ENCODE measurements at regions of chrX and their contacts with region 1.

Region 1: DNA sequence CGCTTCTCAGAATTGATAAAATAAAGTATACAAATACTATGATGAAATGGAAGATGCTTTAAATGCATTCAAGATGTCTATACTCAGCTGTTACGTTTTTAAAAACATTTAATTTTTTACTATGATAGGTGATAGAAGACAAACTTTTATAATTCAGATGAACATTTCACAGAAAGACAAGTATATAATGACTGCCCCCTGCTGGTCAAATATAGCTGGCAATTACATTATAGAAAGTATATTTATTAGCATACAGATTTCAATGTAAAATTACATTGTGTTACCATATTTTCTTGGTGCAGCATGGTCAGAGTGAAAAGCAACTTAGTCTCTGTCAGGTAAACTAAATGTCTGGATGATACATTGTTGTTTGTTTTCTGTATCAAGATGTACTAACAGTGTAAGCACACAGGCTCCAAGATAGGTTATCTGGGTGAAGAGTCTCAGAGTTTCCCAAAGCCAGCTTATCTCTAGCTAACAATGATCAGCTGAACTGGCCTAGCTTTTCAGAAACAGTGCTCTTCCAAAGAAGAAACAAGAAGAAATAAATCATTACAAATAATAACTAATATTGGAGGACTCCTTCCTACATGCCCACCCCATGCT is 54.1 kb downstream of the SRPX start:
- DNase-seq: peak; percentile 43

Region 2: GRCh38 chrX:37509349-37509748 is 657.2 kb before region 1 on chrX:
- in situ Hi-C with region 1: loop called (anchors 25 kb)
- DNase-seq: peak; percentile 46

Region 3: DNA sequence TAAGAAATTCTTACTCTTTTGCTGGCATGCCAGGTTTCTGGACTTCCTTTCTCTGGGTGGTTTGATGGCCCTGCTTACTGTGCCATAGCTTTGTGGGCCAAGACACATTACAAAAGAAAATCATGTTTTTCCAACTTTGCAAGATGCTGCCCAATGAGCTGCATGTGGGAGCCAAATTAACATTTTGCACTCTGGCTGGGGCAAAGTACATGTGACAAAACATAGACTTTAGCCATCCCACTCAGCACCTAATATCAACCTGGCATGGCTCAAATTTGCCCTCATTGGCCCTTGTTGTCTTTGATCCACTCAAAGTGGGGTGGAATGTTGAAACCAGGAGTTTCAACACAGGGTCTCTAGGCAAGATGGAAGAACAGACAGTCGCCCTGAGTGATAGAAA is 279.2 kb before region 1 on chrX:
- in situ Hi-C with region 1: no loop called
- DNase-seq: no peak

Measured in KBM-7 (cell line).